Endothelial cell of umbilical vein (primary cell): ENCODE measurements at regions of chr1 and their contacts with region 1.

Region 1: DNA sequence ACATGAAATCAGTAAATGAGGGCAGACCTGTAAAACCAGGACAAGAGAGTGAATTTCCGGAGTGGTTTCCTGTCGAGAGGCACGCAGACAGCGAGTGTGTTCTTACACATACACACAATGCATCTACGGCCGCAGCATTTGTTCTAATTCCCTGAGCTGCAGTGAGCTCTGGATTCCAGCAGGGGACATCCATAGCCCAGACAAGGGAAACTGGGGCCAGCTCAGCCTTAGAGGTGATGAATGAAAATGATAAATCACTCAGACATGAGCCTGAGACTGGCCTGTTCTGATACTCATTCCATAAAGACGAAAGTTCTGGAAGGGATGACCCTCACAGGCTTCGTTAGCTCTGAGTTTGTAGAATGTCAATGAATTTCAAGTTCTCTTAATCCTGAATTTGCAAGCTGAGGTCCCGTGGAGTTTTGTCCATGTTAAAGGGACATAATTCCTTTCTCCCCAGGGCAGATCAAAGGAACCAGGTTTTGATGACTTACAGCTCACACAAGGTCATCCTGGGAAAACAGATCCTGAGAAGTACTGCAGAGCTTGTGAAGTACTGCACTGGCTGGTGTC is 207.9 kb upstream of the C1orf87 start:
- DNase-seq: peak; percentile 92
- H3K4me3 ChIP-seq: no peak overlapping the region
- H3K27ac ChIP-seq: peak overlapping the region; percentile 74
- H3K4me1 ChIP-seq: peaks cover 40% of the 10 kb centered on the region
- H3K27me3 ChIP-seq: no peaks in the 10 kb centered on the region
- CTCF ChIP-seq: peak; percentile 92 to 98
- POLR2A ChIP-seq: no peak

Region 2: DNA sequence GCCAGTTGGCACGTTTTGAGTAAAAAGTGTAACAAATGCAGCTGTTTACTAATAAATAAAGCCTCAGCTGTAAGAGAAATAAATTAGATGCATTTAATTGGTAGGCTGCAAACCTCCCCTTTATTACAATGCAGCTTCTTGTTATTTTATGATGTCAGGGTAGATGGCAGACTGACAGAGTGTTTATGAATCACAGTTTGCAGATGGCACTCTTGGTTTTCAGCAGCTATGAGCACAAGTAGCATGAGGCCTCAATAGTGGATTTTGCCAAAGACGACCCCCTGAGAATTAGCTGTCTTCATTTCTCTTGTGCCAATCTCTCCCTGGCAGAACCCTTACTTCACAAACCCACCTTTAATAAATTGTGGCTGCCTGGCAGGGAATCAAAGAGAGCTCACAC is 46.7 kb before region 1 on chr1:
- CTCF ChIA-PET with region 1: interaction called, 10 read pairs
- POLR2A ChIA-PET with region 1: no interaction called
- dilution Hi-C with region 1: no loop called
- intact Hi-C with region 1: no loop called
- DNase-seq: no peak
- H3K4me3 ChIP-seq: no peak overlapping the region
- H3K27ac ChIP-seq: no peak overlapping the region
- H3K4me1 ChIP-seq: peaks cover 6% of the 10 kb centered on the region
- H3K27me3 ChIP-seq: no peaks in the 10 kb centered on the region
- CTCF ChIP-seq: no peak
- POLR2A ChIP-seq: no peak

Region 3: DNA sequence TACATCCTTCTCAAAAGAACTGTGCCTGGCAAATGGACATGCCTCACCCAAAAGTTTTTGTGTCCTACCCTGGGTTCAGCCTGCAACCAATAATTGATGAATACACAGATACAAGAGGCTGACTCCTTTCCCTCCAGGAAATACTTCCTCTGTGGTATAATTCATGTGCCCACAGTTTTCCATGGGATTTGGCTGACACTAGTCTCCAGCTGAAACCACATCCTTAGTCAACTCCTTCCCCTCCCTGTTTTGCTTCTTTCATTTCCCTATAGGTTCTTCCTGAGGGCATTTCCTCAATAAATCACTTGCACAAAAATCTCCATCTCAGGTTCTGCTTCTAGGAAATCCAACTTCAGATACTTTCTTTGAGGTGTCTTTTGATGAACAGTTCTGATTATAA is 228.7 kb after region 1 on chr1:
- CTCF ChIA-PET with region 1: interaction called, 12 read pairs
- POLR2A ChIA-PET with region 1: no interaction called
- dilution Hi-C with region 1: no loop called
- intact Hi-C with region 1: loop called (anchors 1 kb)
- DNase-seq: peak; percentile 89
- H3K4me3 ChIP-seq: no peak overlapping the region
- H3K27ac ChIP-seq: peak overlapping the region; percentile 13
- H3K4me1 ChIP-seq: peaks cover 28% of the 10 kb centered on the region
- H3K27me3 ChIP-seq: no peaks in the 10 kb centered on the region
- CTCF ChIP-seq: no peak
- POLR2A ChIP-seq: peak; percentile 79

Region 4: GRCh38 chr1:60596791-60597747 is 315.6 kb after region 1 on chr1:
- CTCF ChIA-PET with region 1: interaction called, 11 read pairs
- POLR2A ChIA-PET with region 1: no interaction called
- dilution Hi-C with region 1: no loop called
- intact Hi-C with region 1: loop called (anchors 2 kb)
- DNase-seq: peak; percentile 57
- H3K4me3 ChIP-seq: no peak overlapping the region
- H3K27ac ChIP-seq: peak overlapping the region; percentile 61
- H3K4me1 ChIP-seq: peaks cover 22% of the 10 kb centered on the region
- H3K27me3 ChIP-seq: no peaks in the 10 kb centered on the region
- CTCF ChIP-seq: peak in 1 of 2 donors; percentile 3
- POLR2A ChIP-seq: no peak

Region 5: GRCh38 chr1:60833173-60833572 is 551.7 kb after region 1 on chr1:
- CTCF ChIA-PET with region 1: interaction called, 12 read pairs
- POLR2A ChIA-PET with region 1: no interaction called
- dilution Hi-C with region 1: no loop called
- intact Hi-C with region 1: loop called (anchors 5 kb)
- DNase-seq: no peak
- H3K4me3 ChIP-seq: no peak overlapping the region
- H3K27ac ChIP-seq: no peak overlapping the region
- H3K4me1 ChIP-seq: no peaks in the 10 kb centered on the region
- H3K27me3 ChIP-seq: no peaks in the 10 kb centered on the region
- CTCF ChIP-seq: no peak
- POLR2A ChIP-seq: no peak

Region 6: GRCh38 chr1:61043010-61043820 is 761.8 kb after region 1 on chr1:
- CTCF ChIA-PET with region 1: interaction called, 46 read pairs
- POLR2A ChIA-PET with region 1: no interaction called
- dilution Hi-C with region 1: no loop called
- intact Hi-C with region 1: loop called (anchors 1 kb)
- DNase-seq: peak; percentile 85
- H3K4me3 ChIP-seq: peak overlapping the region; percentile 39 to 59 (median 54)
- H3K27ac ChIP-seq: peak overlapping the region; percentile 62
- H3K4me1 ChIP-seq: peaks cover 2% of the 10 kb centered on the region
- H3K27me3 ChIP-seq: no peaks in the 10 kb centered on the region
- CTCF ChIP-seq: peak; percentile 85 to 94
- POLR2A ChIP-seq: no peak

Region 7: GRCh38 chr1:61588736-61589672 is 1307.6 kb after region 1 on chr1:
- CTCF ChIA-PET with region 1: interaction called, 6 read pairs
- POLR2A ChIA-PET with region 1: no interaction called
- dilution Hi-C with region 1: no loop called
- intact Hi-C with region 1: loop called (anchors 5 kb)
- DNase-seq: peak; percentile 69
- H3K4me3 ChIP-seq: no peak overlapping the region
- H3K27ac ChIP-seq: no peak overlapping the region
- H3K4me1 ChIP-seq: no peaks in the 10 kb centered on the region
- H3K27me3 ChIP-seq: peaks cover 0 to 2% of the 10 kb centered on the region in 2 experiments
- CTCF ChIP-seq: peak; percentile 83 to 86
- POLR2A ChIP-seq: no peak